ENCODE measurements at regions of chr12 and their contacts with region 1.

Region 1: DNA sequence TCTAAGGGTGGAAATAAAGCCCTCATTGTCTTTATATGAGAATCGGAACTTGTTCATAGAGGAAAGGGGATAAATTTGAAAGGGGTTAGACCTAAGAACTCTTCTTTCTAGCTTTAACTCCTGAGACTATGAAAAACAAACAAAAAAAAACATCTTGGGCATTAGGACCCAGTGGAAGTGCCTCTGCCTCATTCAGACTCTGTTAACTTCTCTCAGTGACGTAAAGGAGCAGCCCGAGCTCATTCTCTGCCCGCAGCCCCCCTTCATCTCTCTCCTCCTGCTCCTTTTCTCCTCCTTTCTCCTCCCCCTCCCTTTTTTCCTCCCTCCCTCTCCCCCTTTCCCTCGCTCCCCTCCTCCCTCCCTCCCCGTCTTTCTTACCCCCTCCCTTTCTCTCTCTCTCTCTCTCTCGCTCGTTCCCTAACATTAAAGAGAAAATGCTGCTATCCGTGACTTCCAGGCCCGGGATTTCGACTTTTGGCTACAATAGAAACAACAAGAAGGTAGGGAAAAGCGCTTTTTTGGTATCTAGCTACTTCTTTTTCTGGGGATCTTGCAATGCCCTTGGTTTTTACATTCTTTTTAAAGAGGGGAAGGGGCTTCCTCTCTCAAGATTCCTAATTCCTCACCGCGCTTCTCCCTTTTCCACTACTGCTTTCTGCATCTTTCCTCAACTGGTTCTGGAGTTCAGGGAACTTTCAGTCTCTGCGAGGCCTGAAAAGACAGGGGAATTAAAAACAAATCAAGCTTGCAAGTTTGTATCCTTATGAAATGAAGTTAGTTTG is at the start of gene RBMS2:
- DNase-seq: peak; percentile 46 to 70 (median 55)
- ATAC-seq: peak; percentile 88 to 94 (median 94)
- H3K4me3 ChIP-seq: peak within 1 kb of the TSS; percentile 23 to 47 (median 34)
- H3K27ac ChIP-seq: peak within 1 kb of the TSS; percentile 50 to 76 (median 71)
- H3K4me1 ChIP-seq: no peaks in the 10 kb centered on the region
- H3K27me3 ChIP-seq: no peaks in the 10 kb centered on the region
- CTCF ChIP-seq: no peak
- POLR2A ChIP-seq: no peak
- total RNA-seq, gene RBMS2: 3.4 to 6.4 (median 4.3) TPM

Region 2: DNA sequence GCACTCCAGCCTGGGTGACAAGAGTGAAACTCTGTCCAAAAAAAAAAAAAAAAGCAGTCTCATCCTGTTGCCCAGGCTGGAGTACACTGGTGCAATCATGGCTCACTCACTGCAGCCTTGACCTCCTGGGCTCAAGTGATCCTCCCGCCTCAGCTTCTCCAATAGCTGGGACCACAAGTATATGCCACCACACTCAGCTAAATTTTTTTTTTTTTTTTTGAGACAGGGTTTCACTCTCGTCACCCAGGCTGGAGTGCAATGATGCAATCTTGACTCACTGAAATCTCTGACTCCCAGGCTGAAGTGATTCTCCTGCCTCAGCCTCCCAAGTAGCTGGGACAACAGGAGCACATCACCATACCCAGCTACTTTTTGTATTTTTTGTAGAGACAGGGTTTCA is 200.8 kb before region 1 on chr12:
- intact Hi-C with region 1: no loop called
- DNase-seq: no peak
- ATAC-seq: no peak
- H3K4me3 ChIP-seq: no peak overlapping the region
- H3K27ac ChIP-seq: no peak overlapping the region
- H3K4me1 ChIP-seq: peaks cover 0 to 3% (median 2%) of the 10 kb centered on the region in 4 donors
- H3K27me3 ChIP-seq: no peaks in the 10 kb centered on the region
- CTCF ChIP-seq: no peak
- POLR2A ChIP-seq: no peak

Region 3: GRCh38 chr12:56565510-56566101 is 43.8 kb after region 1 on chr12:
- intact Hi-C with region 1: loop called (anchors 5 kb)
- DNase-seq: peak in 2 of 3 donors; percentile 53
- ATAC-seq: peak; percentile 74 to 92 (median 86)
- H3K4me3 ChIP-seq: no peak overlapping the region
- H3K27ac ChIP-seq: peak overlapping the region; percentile 19 to 34 (median 28)
- H3K4me1 ChIP-seq: peaks cover 0 to 5% (median 0%) of the 10 kb centered on the region in 4 donors
- H3K27me3 ChIP-seq: no peaks in the 10 kb centered on the region
- CTCF ChIP-seq: no peak
- POLR2A ChIP-seq: no peak

Region 4: GRCh38 chr12:56571126-56571525 is 49.3 kb after region 1 on chr12:
- intact Hi-C with region 1: loop called (anchors 5 kb)
- DNase-seq: no peak
- ATAC-seq: no peak
- H3K4me3 ChIP-seq: no peak overlapping the region
- H3K27ac ChIP-seq: no peak overlapping the region
- H3K4me1 ChIP-seq: peaks cover 0 to 5% (median 0%) of the 10 kb centered on the region in 4 donors
- H3K27me3 ChIP-seq: no peaks in the 10 kb centered on the region
- CTCF ChIP-seq: no peak
- POLR2A ChIP-seq: no peak

Measured in right lobe of liver (tissue), 6 donors.